ENCODE measurements at regions of chr7 and their contacts with region 1.

Region 1: DNA sequence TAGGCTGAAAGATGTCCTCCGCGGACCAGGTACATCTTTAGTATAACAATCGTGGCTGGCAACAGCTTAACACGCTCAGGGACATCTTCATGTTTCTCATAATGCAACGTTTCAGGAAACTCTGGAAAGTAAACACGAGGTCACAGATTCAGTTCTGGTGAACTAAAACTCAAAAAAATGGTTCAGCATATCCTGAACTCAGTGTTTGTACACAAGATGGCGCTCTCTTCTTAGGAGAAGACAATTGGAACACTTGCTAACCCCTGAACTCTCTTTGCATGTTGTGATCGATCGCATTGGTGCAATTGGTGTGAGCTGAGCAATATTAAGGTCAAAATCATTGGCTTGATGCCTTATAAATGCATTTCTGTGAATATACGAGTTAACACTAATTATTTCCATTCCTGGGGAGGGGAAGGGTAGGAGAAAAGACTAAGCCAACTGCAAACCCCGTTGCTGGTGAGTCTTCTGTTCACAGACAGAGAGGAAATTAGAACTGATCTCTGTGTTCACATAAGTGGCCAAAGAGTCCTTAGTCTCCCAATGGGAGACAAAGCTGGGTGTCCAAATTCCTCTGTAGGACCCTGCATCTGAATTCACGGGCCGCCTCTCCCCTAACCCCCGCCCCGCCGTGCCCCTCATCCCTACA is 52.6 kb upstream of the FAM180A start:
- DNase-seq: peak in 1 of 2 donors; percentile 85
- H3K4me3 ChIP-seq: no peak overlapping the region
- H3K27ac ChIP-seq: no peak overlapping the region
- H3K4me1 ChIP-seq: peaks cover 0 to 24% (median 10%) of the 10 kb centered on the region in 4 donors
- H3K27me3 ChIP-seq: peaks cover 0 to 6% (median 0%) of the 10 kb centered on the region in 3 donors
- CTCF ChIP-seq: peak in 5 of 7 experiments; percentile 57 to 82 (median 62)
- EP300 ChIP-seq: no peak
- POLR2A ChIP-seq: no peak

Region 2: DNA sequence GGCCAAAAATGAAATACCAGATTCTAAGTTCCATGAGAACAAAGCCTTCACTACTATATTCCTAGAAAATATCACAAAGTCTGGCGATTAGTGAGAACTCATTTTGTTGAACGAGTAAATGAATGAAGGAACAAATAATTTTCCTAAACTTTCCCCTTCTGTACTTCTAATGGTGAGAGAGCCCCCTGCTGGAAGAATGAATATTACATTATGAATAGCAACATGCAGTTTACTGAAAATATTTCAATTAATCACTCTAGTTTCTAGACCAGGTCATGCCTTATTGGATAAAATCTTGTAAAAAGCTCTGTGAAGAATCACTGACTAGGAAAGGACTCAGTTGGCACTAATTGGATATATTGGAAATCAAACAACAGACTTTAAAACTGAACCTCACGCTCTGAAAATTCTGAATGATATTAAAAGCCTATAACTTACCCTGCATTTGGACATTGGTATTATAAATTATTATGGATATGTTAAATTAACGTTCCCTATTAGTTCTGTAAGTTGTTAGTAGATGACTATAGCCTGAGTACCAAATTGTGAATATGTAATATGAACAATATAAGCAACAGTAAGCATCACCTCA is 208.4 kb after region 1 on chr7:
- intact Hi-C with region 1: loop called (anchors 5 kb)
- DNase-seq: peak in 1 of 2 donors; percentile 66
- H3K4me3 ChIP-seq: no peak overlapping the region
- H3K27ac ChIP-seq: no peak overlapping the region
- H3K4me1 ChIP-seq: peaks cover 0 to 4% (median 0%) of the 10 kb centered on the region in 4 donors
- H3K27me3 ChIP-seq: no peaks in the 10 kb centered on the region
- CTCF ChIP-seq: peak in 5 of 7 experiments; percentile 32 to 76 (median 72)
- EP300 ChIP-seq: no peak
- POLR2A ChIP-seq: no peak

Measured in stomach (tissue), 19 donors.